Activated CD4-positive, alpha-beta T cell treated with anti-CD3 and anti-CD28 coated beads for 36 hours (primary cell): ENCODE measurements at regions of chr1 and their contacts with region 1.

Region 1: GRCh38 chr1:45011837-45012638 is at the start of gene UROD:
- DNase-seq: peak; percentile 96
- ATAC-seq: peak; percentile 80
- H3K4me3 Mint-ChIP-seq: peak within 1 kb of the TSS; percentile 74
- H3K27ac Mint-ChIP-seq: peak within 1 kb of the TSS; percentile 97
- H3K4me1 Mint-ChIP-seq: peaks cover 36% of the 10 kb centered on the region
- H3K27me3 Mint-ChIP-seq: no peaks in the 10 kb centered on the region
- total RNA-seq, gene UROD: 123 to 134 TPM

Region 2: DNA sequence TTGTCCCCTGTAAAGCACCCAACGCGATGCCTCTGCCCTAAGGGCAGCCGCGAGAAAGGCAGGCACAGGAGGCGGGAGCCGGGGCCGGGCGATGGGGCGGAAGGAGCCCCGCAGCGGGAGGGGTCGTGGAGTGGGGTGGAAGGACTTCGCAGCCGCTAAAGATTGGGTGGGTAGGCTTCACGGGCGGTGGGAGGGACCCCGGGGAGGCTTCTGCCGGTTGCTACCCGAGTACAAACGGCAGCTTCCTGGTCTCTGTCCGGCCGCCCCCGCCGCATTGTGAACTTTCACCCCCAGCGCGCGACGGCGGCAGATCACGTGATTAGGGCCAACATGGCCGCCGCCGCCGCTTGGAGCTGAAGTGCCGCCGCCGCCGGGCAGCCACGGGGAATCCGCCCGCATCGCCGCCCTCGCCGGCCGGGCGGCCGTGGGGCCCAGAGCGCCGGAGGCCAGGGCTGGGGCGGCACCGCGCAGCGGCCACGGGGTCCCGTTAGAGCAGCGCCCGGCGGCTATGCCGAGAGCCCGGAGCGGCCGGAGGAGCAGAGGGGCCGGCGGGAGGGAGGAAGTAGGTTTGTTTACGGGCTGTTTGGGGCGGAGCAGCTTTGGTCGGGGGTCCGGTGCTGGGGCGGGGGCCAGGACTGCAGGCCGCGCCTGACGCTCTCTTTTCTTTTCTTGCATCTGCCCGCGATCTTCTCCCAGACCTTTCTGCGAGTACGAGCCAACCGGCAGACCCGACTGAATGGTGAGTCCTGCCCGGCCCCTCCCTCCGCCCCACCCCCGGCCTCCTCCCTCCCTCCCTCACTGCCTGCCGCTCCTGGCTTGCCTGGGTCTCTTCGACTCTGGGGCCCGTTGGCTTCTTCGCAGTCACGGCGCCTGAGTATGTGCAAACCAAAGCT is 380.1 kb before region 1 on chr1:
- CTCF ChIA-PET with region 1: interaction called, 4 read pairs
- POLR2A ChIA-PET with region 1: no interaction called
- intact Hi-C with region 1: loop called in 1 of 2 experiments (anchors 1 kb)
- DNase-seq: peak; percentile 95
- ATAC-seq: peak; percentile 81
- H3K4me3 Mint-ChIP-seq: peak overlapping the region; percentile 86
- H3K27ac Mint-ChIP-seq: peak overlapping the region; percentile 97
- H3K4me1 Mint-ChIP-seq: peaks cover 40% of the 10 kb centered on the region
- H3K27me3 Mint-ChIP-seq: no peaks in the 10 kb centered on the region

Region 3: GRCh38 chr1:44739361-44740178 is 272.5 kb before region 1 on chr1 and contains the start of gene KIF2C:
- CTCF ChIA-PET with region 1: no interaction called
- POLR2A ChIA-PET with region 1: no interaction called
- intact Hi-C with region 1: loop called (anchors 2 to 5 kb)
- DNase-seq: peak; percentile 99
- ATAC-seq: peak; percentile 98
- H3K4me3 Mint-ChIP-seq: peak within 1 kb of the TSS; percentile 98
- H3K27ac Mint-ChIP-seq: peak within 1 kb of the TSS; percentile 94
- H3K4me1 Mint-ChIP-seq: peaks cover 26% of the 10 kb centered on the region
- H3K27me3 Mint-ChIP-seq: no peaks in the 10 kb centered on the region
- total RNA-seq, gene KIF2C: 101 to 119 TPM

Region 4: DNA sequence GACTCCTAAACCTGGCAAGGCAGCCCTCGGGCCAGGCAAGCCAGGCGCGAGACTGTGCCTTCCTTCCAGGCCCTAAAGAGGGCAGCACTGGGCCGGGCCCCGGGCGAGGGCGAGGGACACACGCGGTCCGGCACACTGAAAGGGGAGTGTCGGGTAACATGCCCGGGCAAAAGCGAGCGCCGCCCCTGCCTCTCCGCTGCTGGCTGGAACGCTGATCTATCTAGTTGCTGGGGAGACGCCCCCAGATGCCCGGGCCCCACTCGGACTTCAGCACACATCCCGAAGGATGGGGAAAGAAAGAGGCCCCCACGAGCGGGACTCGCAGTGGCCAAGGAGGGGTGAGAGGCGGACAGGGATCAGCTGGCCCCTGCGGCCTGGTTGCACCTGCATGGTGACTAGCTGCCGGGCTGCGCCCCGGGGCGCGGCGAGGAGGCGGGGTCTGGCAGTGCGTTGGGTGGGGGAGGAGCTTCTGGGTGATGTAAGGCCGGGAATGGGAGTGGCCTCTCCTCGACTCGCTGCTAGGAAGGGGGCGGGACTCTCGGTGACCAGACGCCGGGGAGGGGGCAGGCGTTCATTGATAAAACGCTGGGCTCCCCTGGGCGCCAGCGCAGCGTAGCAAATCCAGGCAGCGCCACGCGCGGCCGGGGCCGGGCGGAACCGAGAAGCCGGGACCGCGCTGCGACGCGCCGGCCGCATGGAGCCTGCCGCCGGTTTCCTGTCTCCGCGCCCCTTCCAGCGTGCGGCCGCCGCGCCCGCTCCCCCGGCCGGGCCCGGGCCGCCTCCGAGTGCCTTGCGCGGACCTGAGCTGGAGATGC is 212.1 kb before region 1 on chr1 and contains the start of gene PLK3:
- CTCF ChIA-PET with region 1: interaction called, 3 read pairs
- POLR2A ChIA-PET with region 1: interaction called, 9 read pairs
- intact Hi-C with region 1: loop called in 1 of 2 experiments (anchors 2 kb)
- DNase-seq: peak; percentile 99
- ATAC-seq: peak; percentile 84
- H3K4me3 Mint-ChIP-seq: peak within 1 kb of the TSS; percentile 87
- H3K27ac Mint-ChIP-seq: peak within 1 kb of the TSS; percentile 100
- H3K4me1 Mint-ChIP-seq: peaks cover 41% of the 10 kb centered on the region
- H3K27me3 Mint-ChIP-seq: no peaks in the 10 kb centered on the region
- total RNA-seq, gene PLK3: 52.1 to 52.7 TPM

Region 5: GRCh38 chr1:44835738-44836675 is 176.0 kb before region 1 on chr1:
- CTCF ChIA-PET with region 1: no interaction called
- POLR2A ChIA-PET with region 1: interaction called, 3 read pairs
- intact Hi-C with region 1: loop called (anchors 2 to 5 kb)
- DNase-seq: peak; percentile 96
- ATAC-seq: peak; percentile 99
- H3K4me3 Mint-ChIP-seq: no peak overlapping the region
- H3K27ac Mint-ChIP-seq: no peak overlapping the region
- H3K4me1 Mint-ChIP-seq: peaks cover 3% of the 10 kb centered on the region
- H3K27me3 Mint-ChIP-seq: peaks cover 5% of the 10 kb centered on the region

Region 6: GRCh38 chr1:45326627-45327623 is 314.9 kb after region 1 on chr1 and contains the start of gene HPDL:
- CTCF ChIA-PET with region 1: interaction called, 4 read pairs
- POLR2A ChIA-PET with region 1: interaction called, 3 read pairs
- intact Hi-C with region 1: loop called in 1 of 2 experiments (anchors 1 kb)
- DNase-seq: peak; percentile 84
- ATAC-seq: peak; percentile 87
- H3K4me3 Mint-ChIP-seq: peak within 1 kb of the TSS; percentile 82
- H3K27ac Mint-ChIP-seq: peak within 1 kb of the TSS; percentile 80
- H3K4me1 Mint-ChIP-seq: peaks cover 23% of the 10 kb centered on the region
- H3K27me3 Mint-ChIP-seq: no peaks in the 10 kb centered on the region
- total RNA-seq, gene HPDL: 12.7 to 17.9 TPM

Region 7: DNA sequence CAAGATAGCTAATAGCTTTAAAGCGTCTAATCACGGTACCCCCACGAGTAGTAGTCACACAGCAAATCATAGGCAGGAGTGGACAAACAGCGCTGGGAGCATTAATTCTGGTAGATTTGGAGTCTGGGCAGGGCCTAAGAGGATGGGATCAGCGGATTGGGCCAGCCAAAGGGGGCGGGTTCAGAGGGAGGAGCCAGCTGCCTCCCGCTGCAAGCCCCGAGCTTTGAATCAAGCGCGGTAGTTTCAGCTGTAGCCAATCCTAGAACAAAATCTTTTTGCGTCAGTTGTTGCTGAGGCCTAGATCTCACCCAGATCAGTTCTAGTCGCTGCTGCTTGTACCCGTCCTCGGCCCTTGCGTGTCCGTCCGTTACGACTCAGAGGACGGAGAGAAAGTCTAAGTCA is 571.2 kb after region 1 on chr1:
- CTCF ChIA-PET with region 1: no interaction called
- POLR2A ChIA-PET with region 1: interaction called, 5 read pairs
- intact Hi-C with region 1: loop called (anchors 1 to 5 kb)
- DNase-seq: peak; percentile 97
- ATAC-seq: peak; percentile 84
- H3K4me3 Mint-ChIP-seq: peak overlapping the region; percentile 91
- H3K27ac Mint-ChIP-seq: peak overlapping the region; percentile 100
- H3K4me1 Mint-ChIP-seq: peaks cover 20% of the 10 kb centered on the region
- H3K27me3 Mint-ChIP-seq: no peaks in the 10 kb centered on the region